ENCODE measurements at regions of chr3 and their contacts with region 1.

Region 1: DNA sequence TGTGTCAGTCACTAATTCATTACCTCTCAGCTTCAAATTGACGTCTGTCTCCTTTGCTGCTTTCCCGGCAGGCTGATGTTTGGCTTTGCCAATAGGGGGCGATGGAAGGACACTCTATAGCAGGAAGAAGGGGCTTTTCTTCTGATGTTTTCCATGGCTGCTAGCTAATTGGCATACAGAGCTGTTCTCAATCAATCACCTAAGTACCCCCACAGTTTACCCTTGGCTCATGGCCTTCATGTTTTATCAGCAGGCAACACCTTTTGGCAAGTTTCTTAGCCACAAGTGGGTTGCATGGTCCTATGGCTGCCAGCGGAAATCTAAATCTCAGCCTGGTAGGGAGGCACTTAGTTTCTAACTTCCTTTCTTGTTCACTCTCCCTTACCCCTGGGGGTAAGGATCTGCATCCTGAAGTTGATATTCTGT is 45.0 kb downstream of the ESYT3 start:
- DNase-seq: no peak
- ATAC-seq: peak in 3 of 8 donors; percentile 14 to 66 (median 58)
- H3K4me3 ChIP-seq: no peak overlapping the region
- H3K27ac ChIP-seq: no peak overlapping the region
- H3K4me1 ChIP-seq: peaks cover 0 to 11% (median 0%) of the 10 kb centered on the region in 9 donors
- H3K27me3 ChIP-seq: no peaks in the 10 kb centered on the region
- CTCF ChIP-seq: peak in 8 of 9 donors; percentile 16 to 67 (median 62)

Region 2: GRCh38 chr3:138588445-138588844 is 109.0 kb after region 1 on chr3:
- intact Hi-C with region 1: loop called in 1 of 10 experiments (anchors 10 kb)
- DNase-seq: no peak
- ATAC-seq: no peak
- H3K4me3 ChIP-seq: no peak overlapping the region
- H3K27ac ChIP-seq: no peak overlapping the region
- H3K4me1 ChIP-seq: peaks cover 0 to 10% (median 6%) of the 10 kb centered on the region in 9 donors
- H3K27me3 ChIP-seq: peaks cover 0 to under 1% (median 0%) of the 10 kb centered on the region in 7 donors
- CTCF ChIP-seq: no peak

Region 3: DNA sequence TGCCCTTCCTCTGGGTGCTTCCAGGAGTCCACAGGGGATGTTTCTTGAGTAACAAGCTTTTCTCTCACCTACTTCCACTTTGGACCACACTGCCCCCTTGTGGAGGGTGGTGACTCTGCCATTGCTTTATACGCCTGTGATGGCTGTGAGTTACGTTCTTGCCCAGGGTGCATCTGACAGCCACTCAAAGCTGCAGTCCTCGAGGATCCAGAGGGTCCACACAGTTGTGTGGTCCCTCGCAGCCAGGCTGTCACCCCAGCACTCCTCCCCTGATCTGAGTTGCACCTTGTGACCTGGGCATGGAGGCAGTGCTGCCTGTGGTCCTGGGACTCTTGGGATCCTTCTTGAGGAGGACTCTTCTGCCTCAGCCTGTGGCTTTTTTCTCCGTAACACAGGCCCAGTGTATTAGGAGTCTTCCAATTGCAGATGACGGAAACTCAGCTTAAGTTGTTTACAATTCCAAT is 444.1 kb after region 1 on chr3:
- intact Hi-C with region 1: loop called in 2 of 10 experiments (anchors 5 to 10 kb)
- DNase-seq: peak; percentile 71 to 81
- ATAC-seq: peak; percentile 61 to 82 (median 78)
- H3K4me3 ChIP-seq: no peak overlapping the region
- H3K27ac ChIP-seq: no peak overlapping the region
- H3K4me1 ChIP-seq: peaks cover 0 to 6% (median 0%) of the 10 kb centered on the region in 9 donors
- H3K27me3 ChIP-seq: peaks cover 0 to 6% (median 0%) of the 10 kb centered on the region in 7 donors
- CTCF ChIP-seq: peak; percentile 82 to 95 (median 90)

Measured in heart right ventricle (tissue), 16 donors.